Right lobe of liver (tissue), 6 donors: ENCODE measurements at regions of chr4 and their contacts with region 1.

Region 1: DNA sequence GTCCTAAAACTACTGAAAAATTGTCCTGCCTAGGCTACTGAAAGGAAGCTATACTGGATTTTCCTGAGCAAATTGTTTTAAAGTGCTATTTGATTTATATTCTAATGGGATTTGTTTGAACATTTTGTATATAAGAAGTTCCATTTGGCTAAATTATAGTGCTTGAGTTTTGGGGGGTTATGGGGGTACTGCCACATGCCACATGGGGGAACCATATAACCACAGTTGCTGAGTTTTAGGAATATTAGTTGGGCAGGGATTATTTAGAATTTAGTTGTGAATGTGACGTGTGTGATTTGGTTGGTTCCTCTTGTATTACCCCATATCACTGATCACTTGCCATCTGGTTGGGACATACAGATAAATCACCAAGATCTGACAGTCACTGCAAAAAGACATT is 224.5 kb upstream of the TAPT1 start:
- DNase-seq: no peak
- ATAC-seq: no peak
- H3K4me3 ChIP-seq: no peak overlapping the region
- H3K27ac ChIP-seq: no peak overlapping the region
- H3K4me1 ChIP-seq: no peaks in the 10 kb centered on the region
- H3K27me3 ChIP-seq: no peaks in the 10 kb centered on the region
- CTCF ChIP-seq: no peak
- POLR2A ChIP-seq: no peak

Region 2: GRCh38 chr4:16157609-16158503 is 292.9 kb before region 1 on chr4:
- intact Hi-C with region 1: no loop called
- DNase-seq: no peak
- ATAC-seq: peak in 2 of 4 donors; percentile 23 to 40
- H3K4me3 ChIP-seq: no peak overlapping the region
- H3K27ac ChIP-seq: no peak overlapping the region
- H3K4me1 ChIP-seq: no peaks in the 10 kb centered on the region
- H3K27me3 ChIP-seq: no peaks in the 10 kb centered on the region
- CTCF ChIP-seq: no peak
- POLR2A ChIP-seq: no peak

Region 3: DNA sequence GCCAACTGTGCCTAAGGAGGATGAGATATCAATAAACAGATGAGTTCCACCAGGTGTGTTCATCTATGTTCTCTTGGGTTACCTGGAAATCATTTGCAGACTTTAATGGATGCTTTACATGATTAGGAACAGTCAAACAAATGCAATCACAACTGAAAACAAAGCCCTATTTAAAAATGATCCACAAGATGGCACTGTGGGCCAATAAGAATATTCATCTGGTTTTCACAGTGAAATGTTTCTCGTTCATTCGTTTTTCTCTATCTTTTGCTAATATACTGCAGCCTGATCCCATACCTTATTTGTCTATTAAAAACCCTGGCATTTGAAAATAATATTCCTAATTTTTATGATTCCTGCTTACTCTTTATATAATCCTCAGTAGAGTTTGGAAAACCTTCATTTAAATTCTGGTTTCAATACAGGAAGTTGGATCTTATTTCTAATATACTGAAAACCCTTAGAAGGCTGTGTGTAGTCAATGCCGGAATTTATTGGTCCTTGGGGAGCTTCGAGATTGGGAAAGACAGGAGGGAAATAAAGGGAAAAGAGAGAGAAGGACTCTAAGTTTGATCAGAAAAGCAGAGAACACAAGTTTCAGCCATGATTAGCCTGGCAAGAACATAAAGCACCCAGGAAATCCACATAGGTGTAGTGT is 160.7 kb before region 1 on chr4:
- intact Hi-C with region 1: loop called in 1 of 2 experiments (anchors 10 kb)
- DNase-seq: no peak
- ATAC-seq: peak; percentile 54 to 75 (median 70)
- H3K4me3 ChIP-seq: no peak overlapping the region
- H3K27ac ChIP-seq: no peak overlapping the region
- H3K4me1 ChIP-seq: peaks cover 0 to 5% (median 0%) of the 10 kb centered on the region in 4 donors
- H3K27me3 ChIP-seq: no peaks in the 10 kb centered on the region
- CTCF ChIP-seq: peak; percentile 52 to 72 (median 68)
- POLR2A ChIP-seq: no peak

Region 4: DNA sequence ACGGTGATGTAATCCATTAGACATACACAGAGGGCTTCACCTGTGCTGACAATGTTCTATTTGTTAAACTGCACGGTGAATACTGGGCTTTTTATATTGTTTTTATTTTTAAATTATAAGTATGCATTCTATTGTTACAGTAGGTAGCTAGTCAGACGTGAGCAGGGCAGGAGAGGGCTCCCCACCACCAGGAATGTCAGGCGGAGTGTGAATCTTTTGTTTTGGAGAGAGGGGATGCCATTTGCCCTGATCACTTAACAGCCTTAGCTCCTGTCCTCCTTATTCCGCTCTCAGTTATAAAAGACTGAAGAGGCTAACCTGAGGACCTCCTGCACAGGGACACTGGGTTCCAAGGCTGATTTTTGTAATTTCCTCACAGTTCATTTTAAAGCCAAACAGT is 72.8 kb before region 1 on chr4:
- intact Hi-C with region 1: no loop called
- DNase-seq: no peak
- ATAC-seq: no peak
- H3K4me3 ChIP-seq: no peak overlapping the region
- H3K27ac ChIP-seq: no peak overlapping the region
- H3K4me1 ChIP-seq: no peaks in the 10 kb centered on the region
- H3K27me3 ChIP-seq: no peaks in the 10 kb centered on the region
- CTCF ChIP-seq: no peak
- POLR2A ChIP-seq: no peak